ENCODE measurements at regions of chr7 and their contacts with region 1.

Region 1: GRCh38 chr7:78033410-78033809 is 234.8 kb downstream of the PHTF2 start:
- DNase-seq: no peak
- ATAC-seq: no peak
- H3K4me3 ChIP-seq: no peak overlapping the region
- H3K27ac ChIP-seq: no peak overlapping the region
- H3K4me1 ChIP-seq: no peaks in the 10 kb centered on the region
- H3K27me3 ChIP-seq: no peaks in the 10 kb centered on the region
- CTCF ChIP-seq: no peak
- EP300 ChIP-seq: no peak
- POLR2A ChIP-seq: no peak
- RAD21 ChIP-seq: no peak

Region 2: DNA sequence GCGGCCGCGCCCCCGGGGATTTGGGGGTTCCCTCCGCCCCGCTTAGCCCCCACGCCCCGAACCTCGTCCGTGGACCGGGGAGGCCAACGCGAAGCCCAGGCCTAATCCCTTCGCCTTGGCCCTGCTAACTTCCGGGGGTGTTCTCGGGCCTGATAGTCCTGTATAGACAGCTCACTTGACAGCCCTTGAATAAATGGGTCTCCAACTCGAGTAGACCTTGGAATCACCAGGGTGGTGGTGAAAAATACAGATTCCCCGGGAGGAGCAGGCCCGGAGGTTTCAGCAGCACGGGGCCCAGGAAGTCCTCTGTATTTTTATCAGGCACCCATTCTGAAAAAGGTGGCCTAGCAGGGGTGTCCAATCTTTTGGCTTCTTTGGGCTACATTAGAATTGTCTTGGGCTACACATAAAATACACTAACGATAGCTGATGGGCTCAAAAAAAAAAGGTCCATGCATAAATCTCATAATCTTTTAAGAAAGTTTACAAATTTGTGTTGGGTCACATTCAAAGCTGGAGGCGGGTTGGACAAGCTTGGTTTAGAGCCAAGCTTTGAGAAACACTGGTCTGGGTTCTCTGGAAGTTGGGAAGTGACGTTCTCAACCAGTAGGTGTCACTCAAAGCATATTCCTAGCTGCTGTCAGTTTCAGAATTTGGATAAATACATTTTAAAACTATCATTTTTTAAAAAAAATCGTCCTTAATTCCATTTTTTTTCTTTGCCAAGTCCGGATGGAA is 13.1 kb before region 1 on chr7:
- CTCF ChIA-PET with region 1: interaction called, 11 read pairs
- POLR2A ChIA-PET with region 1: no interaction called
- RAD21 ChIA-PET with region 1: no interaction called
- SMC1A ChIA-PET with region 1: interaction called, 7 read pairs
- in situ Hi-C with region 1: no loop called
- intact Hi-C with region 1: no loop called
- DNase-seq: peak; percentile 17
- ATAC-seq: peak; percentile 75
- H3K4me3 ChIP-seq: 0 out of 2 replicates have a peak overlapping the region, but pooled peaks have one; percentile 87
- H3K27ac ChIP-seq: no peak overlapping the region
- H3K4me1 ChIP-seq: no peaks in the 10 kb centered on the region; the same call in 1 of the 2 replicates
- H3K27me3 ChIP-seq: peaks cover 3 to 10% of the 10 kb centered on the region in 2 experiments; a peak in 3 of 4 replicates
- CTCF ChIP-seq: peak; percentile 53 to 62 (median 54); a peak in 5 of 6 replicates
- EP300 ChIP-seq: no peak
- POLR2A ChIP-seq: no peak
- RAD21 ChIP-seq: peak; percentile 66

Region 3: DNA sequence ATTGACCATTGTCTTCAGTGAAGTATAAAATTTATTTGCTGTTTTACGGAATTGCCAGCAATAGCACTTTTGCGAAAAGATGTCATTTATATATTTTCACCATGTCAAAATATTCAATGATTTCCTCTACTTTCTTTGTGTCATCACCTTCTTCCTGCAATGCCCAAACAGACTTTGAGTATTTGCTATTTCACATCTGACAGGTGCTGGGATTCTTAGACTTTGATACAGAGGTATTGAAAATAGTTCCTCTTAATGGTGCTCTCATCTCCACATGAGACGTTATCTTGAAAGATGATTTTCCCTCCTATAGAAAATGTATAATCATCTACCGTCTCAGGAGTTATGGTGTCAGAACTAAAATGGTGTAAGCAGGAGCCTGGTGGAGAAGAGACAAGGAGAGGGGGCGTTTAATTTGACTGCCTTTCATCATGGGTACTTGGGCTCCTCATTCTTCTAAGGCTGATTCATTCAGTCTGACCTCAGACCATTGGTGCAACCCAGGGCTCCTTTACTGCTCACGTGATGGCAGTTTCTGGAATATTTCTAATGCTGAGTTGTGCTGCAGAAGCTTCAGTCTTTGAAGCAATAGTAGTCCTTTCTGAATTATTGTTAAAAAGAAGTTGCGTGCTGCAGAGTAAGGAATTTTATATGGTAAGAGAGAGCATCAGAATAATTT is 169.8 kb after region 1 on chr7:
- CTCF ChIA-PET with region 1: no interaction called
- POLR2A ChIA-PET with region 1: no interaction called
- RAD21 ChIA-PET with region 1: no interaction called
- SMC1A ChIA-PET with region 1: no interaction called
- in situ Hi-C with region 1: no loop called
- intact Hi-C with region 1: no loop called
- DNase-seq: no peak
- ATAC-seq: no peak
- H3K4me3 ChIP-seq: no peak overlapping the region
- H3K27ac ChIP-seq: no peak overlapping the region
- H3K4me1 ChIP-seq: no peaks in the 10 kb centered on the region
- H3K27me3 ChIP-seq: no peaks in the 10 kb centered on the region
- CTCF ChIP-seq: no peak
- EP300 ChIP-seq: no peak
- POLR2A ChIP-seq: no peak
- RAD21 ChIP-seq: no peak